Naive thymus-derived CD4-positive, alpha-beta T cell (primary cell): ENCODE measurements at regions of chr7 and their contacts with region 1.

Region 1: DNA sequence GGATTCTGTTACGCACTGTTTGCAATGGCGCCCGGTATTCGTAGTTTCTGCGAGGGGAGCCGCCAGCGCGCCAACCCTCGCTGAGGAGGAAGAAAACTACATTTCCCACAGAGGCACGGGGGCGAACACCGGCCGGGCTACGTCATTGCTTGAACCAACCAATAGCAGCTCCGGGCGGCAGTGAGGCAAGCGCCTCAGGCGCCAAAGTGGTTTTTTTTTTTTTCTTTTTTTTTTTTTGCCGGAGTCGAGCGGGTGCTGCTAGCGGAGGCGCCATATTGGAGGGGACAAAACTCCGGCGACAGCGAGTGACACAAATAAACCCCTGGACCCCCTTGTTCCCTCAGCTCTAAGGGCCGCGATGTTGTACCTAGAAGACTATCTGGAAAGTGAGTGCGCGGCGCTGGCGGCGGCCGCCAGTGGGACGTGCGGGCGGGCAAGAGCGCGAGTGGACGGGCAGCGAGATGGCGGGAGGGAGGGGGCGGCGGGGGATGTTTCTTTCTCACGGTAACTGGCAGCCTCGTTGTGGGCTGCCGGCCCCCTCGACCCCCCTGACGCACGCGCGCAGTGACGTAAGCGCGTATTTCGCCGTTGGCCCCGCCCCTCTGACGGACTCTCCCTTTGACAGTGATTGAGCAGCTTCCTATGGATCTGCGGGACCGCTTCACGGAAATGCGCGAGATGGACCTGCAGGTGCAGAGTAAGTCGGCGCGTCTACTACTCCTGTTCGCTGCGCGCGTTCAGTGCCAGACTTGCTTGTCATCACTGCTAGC is at the start of gene ING3:
- DNase-seq: peak; percentile 97 to 99 (median 98)
- ATAC-seq: peak; percentile 93
- H3K4me3 ChIP-seq: peak within 1 kb of the TSS; percentile 80
- H3K4me3 Mint-ChIP-seq: peak within 1 kb of the TSS; percentile 81 to 99 (median 96)
- H3K27ac ChIP-seq: peak within 1 kb of the TSS; percentile 94
- H3K27ac Mint-ChIP-seq: peak within 1 kb of the TSS; percentile 96 to 99 (median 98)
- H3K4me1 ChIP-seq: peaks cover 5 to 9% of the 10 kb centered on the region in 2 donors
- H3K4me1 Mint-ChIP-seq: peaks cover 14 to 34% (median 25%) of the 10 kb centered on the region in 7 donors
- H3K27me3 ChIP-seq: no peaks in the 10 kb centered on the region
- H3K27me3 Mint-ChIP-seq: peaks cover 12 to 20% (median 15%) of the 10 kb centered on the region in 5 donors
- total RNA-seq, gene ING3: 26.4 to 36.1 (median 27.7) TPM

Region 2: DNA sequence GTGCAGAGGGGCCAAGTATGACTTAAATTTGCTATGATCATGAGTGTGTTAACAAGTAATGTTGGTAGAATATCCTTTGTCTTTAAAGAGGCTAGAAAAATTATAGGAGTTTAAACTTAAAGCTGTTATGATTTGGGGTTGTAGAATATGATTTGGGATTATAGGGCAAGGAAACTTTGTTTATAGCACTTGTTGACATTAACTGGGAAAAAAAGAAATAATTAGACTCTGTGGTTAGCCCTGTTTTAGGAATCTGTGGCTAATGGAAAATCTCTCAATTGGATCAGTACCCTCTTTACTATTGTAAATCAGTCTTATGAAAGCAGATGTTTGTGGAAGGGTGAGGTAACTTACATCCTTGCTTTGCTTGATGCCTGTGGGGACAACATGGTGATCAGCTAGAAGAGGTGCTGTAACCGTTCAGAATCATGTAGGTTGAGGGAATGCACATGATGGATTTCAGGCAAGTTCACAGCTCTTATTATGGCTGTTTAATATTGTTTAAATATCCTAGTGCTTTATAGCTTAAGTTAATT is 11.0 kb after region 1 on chr7:
- CTCF ChIA-PET with region 1: no interaction called
- POLR2A ChIA-PET with region 1: interaction called, 4 read pairs
- intact Hi-C with region 1: loop called in 1 of 2 experiments (anchors 1 kb)
- DNase-seq: no peak
- ATAC-seq: no peak
- H3K4me3 ChIP-seq: no peak overlapping the region
- H3K4me3 Mint-ChIP-seq: no peak overlapping the region
- H3K27ac ChIP-seq: no peak overlapping the region
- H3K27ac Mint-ChIP-seq: peak overlapping the region in 2 of 9 donors; percentile 8 to 10
- H3K4me1 ChIP-seq: no peaks in the 10 kb centered on the region
- H3K4me1 Mint-ChIP-seq: peaks cover 3 to 48% (median 31%) of the 10 kb centered on the region in 7 donors
- H3K27me3 ChIP-seq: no peaks in the 10 kb centered on the region
- H3K27me3 Mint-ChIP-seq: no peaks in the 10 kb centered on the region

Region 3: DNA sequence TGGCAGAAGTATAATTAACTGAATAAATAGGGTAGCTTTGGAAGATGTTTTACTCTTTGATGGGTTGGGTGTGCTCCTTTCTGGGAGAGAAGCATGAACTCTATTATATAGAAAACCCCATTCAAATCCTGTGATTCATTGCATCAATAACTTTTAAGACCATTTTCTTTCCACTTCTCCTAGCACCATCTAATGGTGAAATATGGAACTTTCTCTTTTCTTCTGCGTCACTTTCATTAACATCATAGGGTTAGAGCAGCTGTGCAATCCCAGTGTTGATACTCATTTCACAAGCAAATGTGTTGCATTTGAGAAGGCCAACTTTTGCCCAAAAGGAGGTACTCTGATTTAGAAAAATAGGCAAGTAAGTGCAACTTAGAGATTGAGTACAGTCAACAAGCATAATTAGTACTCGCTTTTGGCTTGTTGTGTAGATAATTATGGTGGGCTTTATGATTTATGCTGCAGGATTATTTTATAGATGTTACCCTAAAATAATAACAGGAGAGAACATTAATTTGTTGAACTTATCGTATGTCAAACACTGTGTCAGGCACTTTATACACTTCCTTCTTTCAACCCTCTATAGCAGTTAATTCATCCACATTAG is 130.7 kb after region 1 on chr7:
- CTCF ChIA-PET with region 1: interaction called, 5 read pairs
- POLR2A ChIA-PET with region 1: interaction called, 3 read pairs
- intact Hi-C with region 1: loop called in 1 of 2 experiments (anchors 1 kb)
- DNase-seq: peak in 7 of 9 donors; percentile 19 to 63 (median 47)
- ATAC-seq: peak; percentile 88
- H3K4me3 ChIP-seq: no peak overlapping the region
- H3K4me3 Mint-ChIP-seq: no peak overlapping the region
- H3K27ac ChIP-seq: no peak overlapping the region
- H3K27ac Mint-ChIP-seq: no peak overlapping the region
- H3K4me1 ChIP-seq: no peaks in the 10 kb centered on the region
- H3K4me1 Mint-ChIP-seq: no peaks in the 10 kb centered on the region
- H3K27me3 ChIP-seq: no peaks in the 10 kb centered on the region
- H3K27me3 Mint-ChIP-seq: peaks cover 5 to 26% (median 12%) of the 10 kb centered on the region in 5 donors

Region 4: GRCh38 chr7:121395961-121396757 is 445.4 kb after region 1 on chr7 and contains the start of gene FAM3C:
- CTCF ChIA-PET with region 1: no interaction called
- POLR2A ChIA-PET with region 1: no interaction called
- intact Hi-C with region 1: loop called (anchors 2 kb)
- DNase-seq: peak; percentile 51 to 98 (median 65)
- ATAC-seq: peak; percentile 95
- H3K4me3 ChIP-seq: peak within 1 kb of the TSS; percentile 72
- H3K4me3 Mint-ChIP-seq: peak within 1 kb of the TSS; percentile 82 to 93 (median 88)
- H3K27ac ChIP-seq: peak within 1 kb of the TSS; percentile 78
- H3K27ac Mint-ChIP-seq: peak within 1 kb of the TSS; percentile 36 to 92 (median 84)
- H3K4me1 ChIP-seq: peaks cover 0 to 3% of the 10 kb centered on the region in 2 donors
- H3K4me1 Mint-ChIP-seq: peaks cover 14 to 44% (median 34%) of the 10 kb centered on the region in 7 donors
- H3K27me3 ChIP-seq: no peaks in the 10 kb centered on the region
- H3K27me3 Mint-ChIP-seq: no peaks in the 10 kb centered on the region
- total RNA-seq, gene FAM3C: 11.1 to 28.4 (median 21.0) TPM

Region 5: DNA sequence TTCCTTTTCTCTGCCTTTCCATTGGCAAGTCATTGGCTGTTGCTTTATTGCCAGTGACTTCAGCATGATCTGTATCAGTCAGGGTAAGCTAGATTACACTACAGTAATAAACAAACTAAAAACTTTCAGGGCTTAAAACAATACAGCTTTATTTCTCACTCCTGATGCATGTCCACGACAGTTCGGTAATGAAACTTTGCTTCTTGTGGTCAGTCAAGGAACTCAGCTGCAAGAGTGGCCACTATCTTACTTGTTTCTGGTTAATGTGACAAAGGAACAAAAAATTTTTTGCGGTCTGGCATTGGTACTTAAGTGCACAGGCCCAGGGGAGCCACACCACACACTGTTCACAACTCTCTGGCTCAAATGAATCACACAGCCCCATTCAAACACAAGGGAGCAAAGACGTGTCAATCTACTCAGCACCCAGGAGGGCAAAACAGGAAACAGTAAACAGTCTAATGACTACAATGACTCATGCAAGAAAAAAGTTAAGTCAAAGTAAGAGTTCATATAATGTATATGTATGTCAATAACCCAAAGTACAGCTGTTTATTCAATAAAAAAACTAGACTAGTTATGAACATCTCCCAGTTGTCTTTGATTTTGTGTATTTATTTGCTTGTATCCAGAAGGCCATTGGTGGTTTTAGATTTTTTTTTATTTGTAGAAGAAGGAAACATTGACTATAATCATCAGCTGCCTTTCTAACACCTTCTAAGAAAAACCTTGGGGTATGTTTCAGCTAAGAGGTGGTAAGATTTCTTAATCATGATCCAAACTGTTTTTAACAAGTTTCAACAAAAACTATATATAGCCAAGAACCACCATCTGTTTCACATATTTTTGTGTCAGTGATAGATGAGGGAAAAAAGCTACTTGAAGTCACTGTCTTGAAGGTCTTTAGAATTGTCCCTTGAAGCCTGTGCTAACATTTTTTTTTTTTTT is 579.8 kb after region 1 on chr7:
- CTCF ChIA-PET with region 1: no interaction called
- POLR2A ChIA-PET with region 1: no interaction called
- intact Hi-C with region 1: loop called in 1 of 2 experiments (anchors 1 kb)
- DNase-seq: peak in 1 of 9 donors; percentile 60
- ATAC-seq: peak; percentile 94
- H3K4me3 ChIP-seq: no peak overlapping the region
- H3K4me3 Mint-ChIP-seq: peak overlapping the region in 1 of 10 donors; percentile 54
- H3K27ac ChIP-seq: no peak overlapping the region
- H3K27ac Mint-ChIP-seq: peak overlapping the region in 3 of 9 donors; percentile 3 to 91 (median 51)
- H3K4me1 ChIP-seq: peaks cover 0 to 6% of the 10 kb centered on the region in 2 donors
- H3K4me1 Mint-ChIP-seq: peaks cover 0 to 45% (median 0%) of the 10 kb centered on the region in 7 donors
- H3K27me3 ChIP-seq: no peaks in the 10 kb centered on the region
- H3K27me3 Mint-ChIP-seq: peaks cover 0 to 4% (median 0%) of the 10 kb centered on the region in 5 donors